CD14-positive monocyte (primary cell): ENCODE measurements at regions of chr11 and their contacts with region 1.

Region 1: GRCh38 chr11:47552566-47553416 is at the start of gene CELF1:
- DNase-seq: peak; percentile 87 to 92 (median 89)
- H3K4me3 ChIP-seq: peak within 1 kb of the TSS; percentile 81 to 96 (median 92)
- H3K4me3 Mint-ChIP-seq: peak within 1 kb of the TSS; percentile 96 to 98
- H3K27ac ChIP-seq: peak within 1 kb of the TSS; percentile 94 to 98
- H3K27ac Mint-ChIP-seq: peak within 1 kb of the TSS; percentile 98 to 99 (median 99)
- H3K4me1 ChIP-seq: peaks cover 46 to 56% of the 10 kb centered on the region in 2 donors
- H3K4me1 Mint-ChIP-seq: peaks cover 42% of the 10 kb centered on the region
- H3K27me3 ChIP-seq: no peaks in the 10 kb centered on the region
- H3K27me3 Mint-ChIP-seq: no peaks in the 10 kb centered on the region
- CTCF ChIP-seq: peak; percentile 97
- polyA plus RNA-seq, gene CELF1: 27.2 to 117 (median 39.9) TPM

Region 2: GRCh38 chr11:47499614-47500013 is 53.2 kb before region 1 on chr11:
- intact Hi-C with region 1: loop called (anchors 5 kb)
- DNase-seq: peak in 1 of 3 donors; percentile 25
- H3K4me3 ChIP-seq: peak overlapping the region in 2 of 3 experiments; percentile 14 to 66
- H3K4me3 Mint-ChIP-seq: peak overlapping the region; percentile 47 to 79
- H3K27ac ChIP-seq: peak overlapping the region; percentile 67 to 89
- H3K27ac Mint-ChIP-seq: peak overlapping the region; percentile 86 to 96 (median 91)
- H3K4me1 ChIP-seq: peaks cover 62 to 65% of the 10 kb centered on the region in 2 donors
- H3K4me1 Mint-ChIP-seq: peaks cover 45% of the 10 kb centered on the region
- H3K27me3 ChIP-seq: no peaks in the 10 kb centered on the region
- H3K27me3 Mint-ChIP-seq: no peaks in the 10 kb centered on the region
- CTCF ChIP-seq: no peak

Region 3: GRCh38 chr11:47514825-47515647 is 37.8 kb before region 1 on chr11:
- intact Hi-C with region 1: loop called (anchors 2 to 5 kb)
- DNase-seq: peak; percentile 77 to 88 (median 85)
- H3K4me3 ChIP-seq: peak overlapping the region; percentile 9 to 49 (median 32)
- H3K4me3 Mint-ChIP-seq: peak overlapping the region; percentile 69 to 73
- H3K27ac ChIP-seq: peak overlapping the region; percentile 99
- H3K27ac Mint-ChIP-seq: peak overlapping the region; percentile 97 to 99 (median 98)
- H3K4me1 ChIP-seq: peaks cover 83 to 88% of the 10 kb centered on the region in 2 donors
- H3K4me1 Mint-ChIP-seq: peaks cover 90% of the 10 kb centered on the region
- H3K27me3 ChIP-seq: no peaks in the 10 kb centered on the region
- H3K27me3 Mint-ChIP-seq: peaks cover 0 to 2% (median 0%) of the 10 kb centered on the region in 3 donors
- CTCF ChIP-seq: no peak